ENCODE measurements at regions of chr20 and their contacts with region 1.

Region 1: GRCh38 chr20:35363190-35363589 is 48.6 kb downstream of the UQCC1 start:
- DNase-seq: no peak
- H3K4me3 ChIP-seq: no peak overlapping the region
- H3K27ac ChIP-seq: no peak overlapping the region
- H3K4me1 ChIP-seq: no peaks in the 10 kb centered on the region
- H3K27me3 ChIP-seq: no peaks in the 10 kb centered on the region
- CTCF ChIP-seq: no peak
- POLR2A ChIP-seq: no peak

Region 2: DNA sequence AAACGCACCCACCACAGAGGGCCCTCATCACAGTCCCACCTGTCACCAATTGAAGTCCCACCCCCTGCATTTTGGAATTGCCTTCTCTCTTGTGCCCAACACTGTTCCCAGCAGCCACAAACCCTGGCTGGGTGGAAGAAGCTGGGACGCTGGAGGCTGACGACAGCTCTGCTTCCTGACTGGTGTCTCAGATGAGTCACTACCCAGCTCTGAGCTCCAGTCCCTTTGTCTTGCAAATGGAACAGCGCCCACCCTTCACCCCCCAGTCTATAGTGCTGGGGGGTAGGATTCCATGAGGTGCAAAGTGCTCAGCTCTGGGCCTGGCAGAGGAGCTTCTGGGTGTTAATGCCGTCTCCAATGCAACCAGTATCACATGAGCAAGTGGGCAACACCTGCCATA is 1028.3 kb after region 1 on chr20:
- intact Hi-C with region 1: loop called (anchors 5 kb)
- DNase-seq: no peak
- H3K4me3 ChIP-seq: no peak overlapping the region
- H3K27ac ChIP-seq: no peak overlapping the region
- H3K4me1 ChIP-seq: no peaks in the 10 kb centered on the region
- H3K27me3 ChIP-seq: no peaks in the 10 kb centered on the region
- CTCF ChIP-seq: no peak
- POLR2A ChIP-seq: no peak